ENCODE measurements at regions of chr18 and their contacts with region 1.

Region 1: GRCh38 chr18:23503038-23503962 is at the start of gene RMC1:
- DNase-seq: peak; percentile 94 to 99 (median 98)
- ATAC-seq: peak; percentile 91
- H3K4me3 ChIP-seq: peak within 1 kb of the TSS; percentile 73 to 91
- H3K4me3 Mint-ChIP-seq: peak within 1 kb of the TSS; percentile 93
- H3K27ac ChIP-seq: peak within 1 kb of the TSS; percentile 83 to 88
- H3K27ac Mint-ChIP-seq: peak within 1 kb of the TSS; percentile 92
- H3K4me1 ChIP-seq: peaks cover 35% of the 10 kb centered on the region
- H3K4me1 Mint-ChIP-seq: peaks cover 49% of the 10 kb centered on the region
- H3K27me3 ChIP-seq: no peaks in the 10 kb centered on the region
- H3K27me3 Mint-ChIP-seq: no peaks in the 10 kb centered on the region
- CTCF ChIP-seq: no peak
- total RNA-seq, gene RMC1: 59.8 to 62.2 TPM

Region 2: DNA sequence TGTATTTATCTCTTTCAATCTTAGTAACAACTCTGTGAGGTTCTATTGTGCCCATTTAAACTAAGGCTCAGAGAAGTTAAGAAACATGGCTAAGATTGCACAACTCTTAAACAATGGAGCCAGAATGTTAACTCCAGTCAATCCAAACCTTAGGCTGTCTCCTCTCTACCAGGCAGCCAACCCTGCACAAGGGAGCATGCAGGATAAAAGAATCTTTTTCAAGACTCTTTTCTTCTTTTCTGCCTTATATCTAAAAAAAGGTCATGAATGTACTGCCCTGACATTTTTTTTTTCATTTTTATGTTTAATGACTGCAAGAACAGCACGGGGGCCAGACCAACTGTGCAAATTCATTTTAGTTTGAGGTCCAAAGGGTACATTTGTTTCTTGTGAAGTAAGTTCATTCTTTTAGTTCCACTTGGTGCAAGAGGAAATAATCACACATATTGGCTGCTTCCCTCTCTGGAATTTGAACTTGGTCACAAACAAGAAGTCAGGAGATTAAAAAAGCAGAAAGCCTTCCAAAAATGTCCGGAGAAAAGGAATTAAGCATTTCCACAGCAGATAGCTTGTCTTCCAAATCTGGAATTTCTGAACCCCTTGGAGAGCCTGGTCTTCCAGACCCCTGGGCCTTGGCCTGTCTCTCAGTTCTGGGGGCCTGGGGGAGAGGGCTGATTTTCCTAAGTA is 146.2 kb before region 1 on chr18:
- CTCF ChIA-PET with region 1: no interaction called
- POLR2A ChIA-PET with region 1: no interaction called
- intact Hi-C with region 1: loop called in 1 of 2 experiments (anchors 5 kb)
- DNase-seq: no peak
- ATAC-seq: no peak
- H3K4me3 ChIP-seq: no peak overlapping the region
- H3K4me3 Mint-ChIP-seq: no peak overlapping the region
- H3K27ac ChIP-seq: no peak overlapping the region
- H3K27ac Mint-ChIP-seq: no peak overlapping the region
- H3K4me1 ChIP-seq: peaks cover 5% of the 10 kb centered on the region
- H3K4me1 Mint-ChIP-seq: peaks cover 17% of the 10 kb centered on the region
- H3K27me3 ChIP-seq: no peaks in the 10 kb centered on the region
- H3K27me3 Mint-ChIP-seq: no peaks in the 10 kb centered on the region
- CTCF ChIP-seq: no peak

Region 3: GRCh38 chr18:23452728-23453679 is 50.3 kb before region 1 on chr18 and contains the start of gene RIOK3:
- CTCF ChIA-PET with region 1: interaction called, 3 read pairs
- POLR2A ChIA-PET with region 1: interaction called, 3 read pairs
- intact Hi-C with region 1: loop called (anchors 1 to 2 kb)
- DNase-seq: peak; percentile 71 to 93 (median 85)
- ATAC-seq: peak; percentile 90
- H3K4me3 ChIP-seq: peak within 1 kb of the TSS; percentile 69 to 97
- H3K4me3 Mint-ChIP-seq: peak within 1 kb of the TSS; percentile 99
- H3K27ac ChIP-seq: peak within 1 kb of the TSS; percentile 65 to 85
- H3K27ac Mint-ChIP-seq: peak within 1 kb of the TSS; percentile 94
- H3K4me1 ChIP-seq: peaks cover 32% of the 10 kb centered on the region
- H3K4me1 Mint-ChIP-seq: peaks cover 49% of the 10 kb centered on the region
- H3K27me3 ChIP-seq: no peaks in the 10 kb centered on the region
- H3K27me3 Mint-ChIP-seq: no peaks in the 10 kb centered on the region
- CTCF ChIP-seq: no peak
- total RNA-seq, gene RIOK3: 159 to 185 TPM

Region 4: GRCh38 chr18:23487738-23488570 is 15.3 kb before region 1 on chr18:
- CTCF ChIA-PET with region 1: interaction called, 18 read pairs
- POLR2A ChIA-PET with region 1: interaction called, 3 read pairs
- intact Hi-C with region 1: no loop called
- DNase-seq: peak in 8 of 9 experiments; percentile 26 to 59 (median 48)
- ATAC-seq: peak; percentile 73
- H3K4me3 ChIP-seq: peak overlapping the region; percentile 2 to 24
- H3K4me3 Mint-ChIP-seq: peak overlapping the region; percentile 76
- H3K27ac ChIP-seq: peak overlapping the region; percentile 31 to 60
- H3K27ac Mint-ChIP-seq: peak overlapping the region; percentile 77
- H3K4me1 ChIP-seq: peaks cover 12% of the 10 kb centered on the region
- H3K4me1 Mint-ChIP-seq: peaks cover 15% of the 10 kb centered on the region
- H3K27me3 ChIP-seq: no peaks in the 10 kb centered on the region
- H3K27me3 Mint-ChIP-seq: no peaks in the 10 kb centered on the region
- CTCF ChIP-seq: no peak

Region 5: GRCh38 chr18:23586249-23587196 is 83.2 kb after region 1 on chr18 and contains the start of gene NPC1:
- CTCF ChIA-PET with region 1: interaction called, 18 read pairs
- POLR2A ChIA-PET with region 1: no interaction called
- intact Hi-C with region 1: loop called (anchors 1 kb)
- DNase-seq: peak; percentile 84 to 96 (median 91)
- ATAC-seq: peak; percentile 88
- H3K4me3 ChIP-seq: peak within 1 kb of the TSS; percentile 99 to 100
- H3K4me3 Mint-ChIP-seq: peak within 1 kb of the TSS; percentile 95
- H3K27ac ChIP-seq: peak within 1 kb of the TSS; percentile 99 to 100
- H3K27ac Mint-ChIP-seq: peak within 1 kb of the TSS; percentile 97
- H3K4me1 ChIP-seq: peaks cover 24% of the 10 kb centered on the region
- H3K4me1 Mint-ChIP-seq: peaks cover 41% of the 10 kb centered on the region
- H3K27me3 ChIP-seq: no peaks in the 10 kb centered on the region
- H3K27me3 Mint-ChIP-seq: no peaks in the 10 kb centered on the region
- CTCF ChIP-seq: peak; percentile 99
- total RNA-seq, gene NPC1: 37.3 to 38.9 TPM

Region 6: GRCh38 chr18:23812546-23813440 is 309.5 kb after region 1 on chr18:
- CTCF ChIA-PET with region 1: interaction called, 3 read pairs
- POLR2A ChIA-PET with region 1: no interaction called
- intact Hi-C with region 1: loop called (anchors 1 to 5 kb)
- DNase-seq: peak in 2 of 9 experiments; percentile 45 to 59
- ATAC-seq: no peak
- H3K4me3 ChIP-seq: no peak overlapping the region
- H3K4me3 Mint-ChIP-seq: no peak overlapping the region
- H3K27ac ChIP-seq: no peak overlapping the region
- H3K27ac Mint-ChIP-seq: no peak overlapping the region
- H3K4me1 ChIP-seq: peaks cover 19% of the 10 kb centered on the region
- H3K4me1 Mint-ChIP-seq: peaks cover 30% of the 10 kb centered on the region
- H3K27me3 ChIP-seq: no peaks in the 10 kb centered on the region
- H3K27me3 Mint-ChIP-seq: no peaks in the 10 kb centered on the region
- CTCF ChIP-seq: peak; percentile 67

Region 7: GRCh38 chr18:24118750-24119577 is 615.7 kb after region 1 on chr18:
- CTCF ChIA-PET with region 1: no interaction called
- POLR2A ChIA-PET with region 1: no interaction called
- intact Hi-C with region 1: loop called in 1 of 2 experiments (anchors 5 kb)
- DNase-seq: peak; percentile 55 to 89 (median 79)
- ATAC-seq: peak; percentile 90
- H3K4me3 ChIP-seq: no peak overlapping the region
- H3K4me3 Mint-ChIP-seq: no peak overlapping the region
- H3K27ac ChIP-seq: no peak overlapping the region
- H3K27ac Mint-ChIP-seq: no peak overlapping the region
- H3K4me1 ChIP-seq: peaks cover 10% of the 10 kb centered on the region
- H3K4me1 Mint-ChIP-seq: peaks cover 23% of the 10 kb centered on the region
- H3K27me3 ChIP-seq: no peaks in the 10 kb centered on the region
- H3K27me3 Mint-ChIP-seq: no peaks in the 10 kb centered on the region
- CTCF ChIP-seq: peak; percentile 77